WTC11 (cell line): ENCODE measurements at regions of chr1 and their contacts with region 1.

Region 1: GRCh38 chr1:3618881-3619671 is 5.7 kb upstream of the TPRG1L start:
- DNase-seq: peak; percentile 78
- ATAC-seq: peak; percentile 81
- H3K4me3 Mint-ChIP-seq: no peak overlapping the region
- H3K27ac Mint-ChIP-seq: no peak overlapping the region
- H3K4me1 Mint-ChIP-seq: peaks cover 24% of the 10 kb centered on the region
- H3K27me3 Mint-ChIP-seq: peaks cover 8% of the 10 kb centered on the region
- CTCF ChIP-seq: peak; percentile 77

Region 2: DNA sequence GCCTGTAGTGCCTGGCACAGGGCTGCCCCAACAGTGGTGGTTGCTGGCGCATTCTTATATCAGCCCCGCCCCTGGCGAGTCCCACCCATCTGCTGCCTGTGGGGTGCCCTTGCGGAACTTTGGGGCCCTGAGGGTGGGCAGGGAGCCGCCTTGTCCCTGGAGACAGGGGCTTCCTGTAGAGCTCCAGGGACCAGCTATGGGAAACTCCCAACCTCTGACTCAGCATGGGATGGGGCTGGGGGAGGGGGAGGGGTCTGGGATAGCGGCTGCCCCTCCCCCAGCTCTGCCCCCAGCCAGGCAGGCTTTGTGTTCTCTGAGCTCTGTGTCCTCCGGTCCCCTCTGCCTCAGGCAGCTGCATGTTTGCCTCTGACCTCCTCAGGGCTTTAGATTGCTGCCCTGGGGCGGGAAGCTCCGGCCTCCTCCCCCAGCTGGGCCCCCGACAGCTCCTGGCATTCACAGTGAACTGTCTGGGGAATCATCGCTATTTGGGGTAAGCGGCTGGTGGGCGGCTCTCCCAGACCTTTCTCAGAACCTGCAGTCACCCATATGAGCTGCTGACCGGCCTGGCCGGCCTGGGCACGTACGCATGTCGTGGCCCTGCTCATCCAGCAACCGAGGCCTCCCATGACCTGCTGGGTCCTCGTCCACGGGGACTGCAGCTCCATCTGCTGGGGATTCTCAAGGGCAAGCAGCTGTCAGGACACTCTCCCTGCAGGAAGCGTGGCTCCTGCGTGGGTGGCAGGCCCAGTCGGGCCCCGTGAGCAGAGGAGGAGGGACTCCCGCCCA is 147.6 kb before region 1 on chr1:
- CTCF ChIA-PET with region 1: interaction called, 19 read pairs
- POLR2A ChIA-PET with region 1: no interaction called
- DNase-seq: peak; percentile 77
- ATAC-seq: peak; percentile 82
- H3K4me3 Mint-ChIP-seq: no peak overlapping the region
- H3K27ac Mint-ChIP-seq: peak overlapping the region; percentile 70; the same call in 1 of the 2 replicates
- H3K4me1 Mint-ChIP-seq: peaks cover 17% of the 10 kb centered on the region
- H3K27me3 Mint-ChIP-seq: no peaks in the 10 kb centered on the region
- CTCF ChIP-seq: no peak

Region 3: DNA sequence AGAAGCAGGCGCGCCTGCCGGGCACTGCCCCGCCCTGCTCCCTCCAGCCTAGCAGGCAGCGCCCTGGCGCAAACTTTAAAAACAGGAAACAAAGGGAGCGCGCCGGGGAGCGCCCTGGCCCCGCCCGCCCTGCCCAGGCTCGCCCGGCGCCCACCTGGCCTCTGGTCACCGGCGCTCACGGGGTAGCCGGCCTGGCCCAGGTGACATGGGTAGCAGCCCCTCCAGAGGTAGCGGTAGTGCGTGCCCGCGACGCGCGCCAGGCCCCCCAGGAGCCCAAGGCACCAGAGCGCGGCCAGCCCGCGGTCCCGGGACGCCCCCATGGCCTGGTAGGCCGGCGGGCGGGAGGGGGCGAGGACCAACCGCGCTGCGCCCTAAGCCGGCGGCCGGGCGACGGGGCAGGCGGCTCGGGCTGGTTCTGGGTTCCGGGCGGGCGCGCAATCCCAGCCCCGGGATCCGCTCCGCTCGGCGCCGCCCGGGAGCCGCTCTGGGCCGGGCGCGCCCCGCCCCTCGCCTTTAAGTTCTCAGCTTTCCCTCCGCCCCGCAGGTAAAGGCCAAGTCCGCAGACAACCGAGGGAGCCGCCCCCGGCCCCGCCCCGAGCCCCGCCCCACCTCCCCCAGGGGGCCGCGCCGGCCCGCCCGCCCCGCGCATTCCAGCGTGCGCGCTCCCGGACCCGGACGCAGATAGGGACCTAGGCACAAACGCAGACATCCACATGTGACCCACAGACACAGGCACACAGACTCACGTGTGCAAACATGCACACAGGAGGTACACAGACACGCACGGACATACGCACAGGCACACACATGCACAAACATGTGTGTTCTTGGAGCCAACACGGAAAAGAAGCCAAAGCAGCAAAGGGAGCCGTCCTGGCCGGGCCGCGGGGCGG is 87.9 kb before region 1 on chr1:
- CTCF ChIA-PET with region 1: interaction called, 42 read pairs
- POLR2A ChIA-PET with region 1: no interaction called
- DNase-seq: peak; percentile 88
- ATAC-seq: peak; percentile 89
- H3K4me3 Mint-ChIP-seq: peak overlapping the region; percentile 88
- H3K27ac Mint-ChIP-seq: peak overlapping the region; percentile 99
- H3K4me1 Mint-ChIP-seq: peaks cover 10% of the 10 kb centered on the region
- H3K27me3 Mint-ChIP-seq: peaks cover 24% of the 10 kb centered on the region
- CTCF ChIP-seq: no peak

Region 4: DNA sequence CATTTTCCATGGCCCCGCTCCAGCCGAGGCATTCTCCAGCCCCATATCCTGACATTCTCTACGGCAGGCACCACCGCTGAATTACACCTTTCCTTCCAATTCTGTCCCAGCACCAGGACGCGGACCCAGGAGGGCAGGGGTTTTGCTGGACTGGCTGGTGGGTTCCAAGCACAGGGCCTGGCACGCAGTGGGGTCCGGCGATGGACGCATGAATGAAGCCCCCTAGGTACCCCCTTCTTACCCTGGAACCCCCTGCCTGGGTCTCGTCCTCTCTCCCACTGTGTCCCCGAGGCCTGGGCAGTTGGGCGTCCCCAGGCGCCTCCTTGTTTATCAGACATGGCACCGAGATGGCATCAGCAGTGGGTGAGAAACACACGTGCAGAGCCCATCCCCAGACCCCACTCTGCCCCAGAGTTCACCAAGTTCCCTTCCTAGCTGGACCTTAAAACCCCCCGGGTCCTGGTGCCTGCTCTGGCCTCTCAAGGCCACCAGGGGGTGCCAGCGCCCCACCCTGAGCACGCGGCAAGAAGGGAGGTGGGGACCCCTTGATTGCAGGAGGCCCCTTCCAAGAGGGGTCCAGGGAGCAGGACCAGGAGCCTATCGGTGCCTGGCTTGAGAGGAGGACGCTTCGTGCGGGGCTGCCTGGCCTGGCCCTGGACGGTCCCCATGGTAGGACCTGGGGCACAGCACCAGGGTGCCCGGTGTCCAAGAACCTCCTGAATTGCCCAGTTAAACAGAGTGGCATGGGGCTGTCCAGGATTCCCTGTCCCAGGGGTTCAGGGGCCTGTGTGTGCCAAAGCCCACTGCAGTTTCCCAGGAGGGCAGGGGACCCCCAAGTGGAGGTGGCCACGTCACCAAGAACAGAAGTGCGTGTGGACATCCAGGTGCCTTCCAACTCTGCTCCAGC is 53.9 kb before region 1 on chr1:
- CTCF ChIA-PET with region 1: interaction called, 86 read pairs
- POLR2A ChIA-PET with region 1: no interaction called
- DNase-seq: peak; percentile 71
- ATAC-seq: peak; percentile 87
- H3K4me3 Mint-ChIP-seq: no peak overlapping the region
- H3K27ac Mint-ChIP-seq: no peak overlapping the region
- H3K4me1 Mint-ChIP-seq: no peaks in the 10 kb centered on the region
- H3K27me3 Mint-ChIP-seq: no peaks in the 10 kb centered on the region
- CTCF ChIP-seq: peak; percentile 89

Region 5: GRCh38 chr1:3598051-3598491 is 21.0 kb before region 1 on chr1:
- CTCF ChIA-PET with region 1: interaction called, 65 read pairs
- POLR2A ChIA-PET with region 1: no interaction called
- DNase-seq: peak; percentile 26
- ATAC-seq: peak; percentile 30
- H3K4me3 Mint-ChIP-seq: no peak overlapping the region
- H3K27ac Mint-ChIP-seq: no peak overlapping the region
- H3K4me1 Mint-ChIP-seq: peaks cover 20% of the 10 kb centered on the region
- H3K27me3 Mint-ChIP-seq: no peaks in the 10 kb centered on the region
- CTCF ChIP-seq: no peak